ENCODE measurements at regions of chr17 and their contacts with region 1.

Region 1: DNA sequence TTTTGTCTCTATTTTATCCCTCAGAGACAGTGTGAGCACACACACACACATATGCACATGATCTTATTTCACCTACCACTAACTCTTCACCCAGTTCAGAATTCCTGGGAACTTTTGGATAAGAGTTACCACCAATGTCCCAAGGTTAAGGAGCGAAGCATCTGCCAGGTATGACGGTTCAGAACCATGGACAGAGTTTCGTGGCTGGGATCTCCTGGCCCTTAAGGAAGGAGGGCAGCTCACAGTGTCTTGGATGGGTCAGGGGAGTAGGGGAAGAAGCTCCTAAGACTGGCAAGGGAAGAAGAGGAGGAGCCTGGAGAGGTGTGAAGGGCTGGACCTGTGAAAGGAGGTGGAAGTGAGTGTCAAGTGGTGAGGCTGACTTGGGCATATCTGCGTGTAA is 23.0 kb upstream of the TMEM132E start:
- DNase-seq: peak in 3 of 5 donors; percentile 57 to 81 (median 75)
- H3K4me3 ChIP-seq: no peak overlapping the region
- H3K27ac ChIP-seq: no peak overlapping the region
- H3K4me1 ChIP-seq: no peaks in the 10 kb centered on the region
- H3K27me3 ChIP-seq: no peaks in the 10 kb centered on the region
- CTCF ChIP-seq: no peak

Region 2: DNA sequence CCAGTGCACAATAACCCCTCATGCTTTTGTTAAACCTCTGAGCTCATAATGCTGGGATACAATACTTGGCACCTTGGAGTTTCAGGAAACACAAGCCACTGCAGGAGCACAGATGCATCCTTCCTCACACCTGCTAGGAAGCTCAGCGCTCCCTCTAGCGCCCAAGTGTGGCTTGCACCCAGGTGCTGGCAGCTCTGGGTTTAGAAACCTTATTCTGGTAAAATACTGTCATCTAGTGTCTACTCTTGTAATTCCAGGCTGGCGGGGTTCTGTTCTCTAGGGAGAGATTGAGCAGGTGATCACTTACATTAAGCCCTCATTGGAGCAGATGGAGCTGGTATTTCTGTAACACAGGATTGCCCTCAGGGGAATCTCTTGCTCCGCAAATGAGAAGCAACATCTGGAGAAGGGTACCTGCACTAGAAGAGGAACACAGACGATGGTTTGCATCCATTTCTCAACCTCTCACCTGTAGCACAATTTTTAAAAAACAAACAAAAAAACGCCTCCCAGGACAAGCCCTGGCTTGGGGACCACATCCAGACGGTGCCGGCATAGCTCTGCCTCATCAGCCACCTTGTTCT is 194.8 kb before region 1 on chr17:
- intact Hi-C with region 1: no loop called
- DNase-seq: peak; percentile 91 to 95 (median 94)
- H3K4me3 ChIP-seq: no peak overlapping the region
- H3K27ac ChIP-seq: no peak overlapping the region
- H3K4me1 ChIP-seq: no peaks in the 10 kb centered on the region
- H3K27me3 ChIP-seq: no peaks in the 10 kb centered on the region
- CTCF ChIP-seq: peak; percentile 100

Region 3: DNA sequence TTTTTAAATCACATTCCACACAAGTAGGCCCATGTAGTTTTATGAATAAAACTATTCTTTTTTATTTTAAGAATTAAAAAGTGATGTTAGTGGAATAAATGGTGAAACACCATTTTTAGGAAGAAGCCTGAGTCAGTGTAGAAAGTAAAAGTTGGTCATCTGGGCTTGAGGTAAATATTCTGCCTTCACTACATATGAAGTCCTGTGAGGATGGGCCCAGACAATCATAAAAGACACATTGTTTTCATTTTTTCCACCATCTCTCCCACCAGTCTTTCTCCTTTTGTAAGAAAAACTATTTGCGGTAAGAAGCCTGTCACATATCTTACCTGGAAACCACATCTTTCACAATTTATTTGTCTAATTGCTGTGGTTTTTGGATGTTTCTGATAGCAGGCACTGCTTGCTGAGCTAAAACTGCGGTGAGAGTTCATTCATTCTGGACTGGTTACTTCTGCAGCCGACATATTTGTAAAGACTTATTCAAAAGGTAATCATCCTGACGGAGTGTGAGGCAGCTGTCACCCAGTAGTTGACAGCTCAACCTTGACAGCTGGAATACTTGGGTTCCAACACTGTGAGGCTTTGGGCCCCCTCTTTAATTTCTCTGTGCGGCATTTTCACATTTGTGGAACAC is 517.7 kb after region 1 on chr17:
- intact Hi-C with region 1: no loop called
- DNase-seq: no peak
- H3K4me3 ChIP-seq: peak overlapping the region in 1 of 3 donors; percentile 1
- H3K27ac ChIP-seq: peak overlapping the region; percentile 16
- H3K4me1 ChIP-seq: peaks cover 0 to 12% (median 9%) of the 10 kb centered on the region in 3 donors
- H3K27me3 ChIP-seq: no peaks in the 10 kb centered on the region
- CTCF ChIP-seq: no peak

Region 4: GRCh38 chr17:35089586-35090296 is 533.4 kb after region 1 on chr17:
- intact Hi-C with region 1: loop called (anchors 10 kb)
- DNase-seq: no peak
- H3K4me3 ChIP-seq: peak overlapping the region; percentile 39 to 67 (median 55)
- H3K27ac ChIP-seq: peak overlapping the region; percentile 45 to 65
- H3K4me1 ChIP-seq: peaks cover 0 to 8% (median 0%) of the 10 kb centered on the region in 3 donors
- H3K27me3 ChIP-seq: no peaks in the 10 kb centered on the region
- CTCF ChIP-seq: no peak

Measured in kidney (tissue), 22 donors.